Activated CD4-positive, alpha-beta memory T cell treated with anti-CD3 and anti-CD28 coated beads, Interleukin-2, amount 10 ng/mL, durations not matched to agents 7 days and 5 days (primary cell): ENCODE measurements at regions of chr1 and their contacts with region 1.

Region 1: DNA sequence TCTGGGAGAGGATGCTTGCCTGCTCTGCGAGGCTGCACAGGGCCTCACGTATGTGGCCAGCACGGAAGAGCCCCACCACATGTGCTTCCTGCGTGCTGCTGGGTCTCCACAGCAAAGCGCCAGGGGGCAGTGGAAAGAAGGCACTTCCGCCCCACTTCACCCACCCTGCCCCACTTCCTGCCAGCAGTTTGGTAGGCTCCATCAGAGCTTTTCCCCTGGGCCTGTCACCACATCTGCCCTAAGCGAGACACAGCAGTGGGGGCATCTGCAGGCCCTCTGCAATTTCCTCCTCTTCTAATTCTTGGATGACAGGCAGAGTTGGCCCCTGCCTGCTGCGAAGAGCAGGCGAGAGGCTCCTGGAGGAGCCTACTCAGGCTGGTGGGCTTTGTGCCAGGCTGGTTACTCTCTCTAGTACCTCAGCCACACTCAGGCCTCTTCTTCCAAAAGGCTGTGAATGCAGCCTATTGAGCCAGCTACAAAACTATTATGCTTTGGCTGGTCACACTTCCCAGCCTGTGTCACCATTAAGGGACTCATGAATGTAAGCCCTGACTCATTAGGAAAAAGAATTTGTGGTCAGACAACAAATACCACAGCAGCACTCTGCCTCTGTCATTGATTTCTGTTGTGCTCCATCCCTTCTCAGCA is 25.0 kb downstream of the CD244 start:
- DNase-seq: peak; percentile 92
- H3K4me3 Mint-ChIP-seq: peak overlapping the region; percentile 52
- H3K27ac Mint-ChIP-seq: peak overlapping the region; percentile 98
- H3K4me1 Mint-ChIP-seq: peaks cover 53% of the 10 kb centered on the region
- H3K27me3 Mint-ChIP-seq: no peaks in the 10 kb centered on the region

Region 2: DNA sequence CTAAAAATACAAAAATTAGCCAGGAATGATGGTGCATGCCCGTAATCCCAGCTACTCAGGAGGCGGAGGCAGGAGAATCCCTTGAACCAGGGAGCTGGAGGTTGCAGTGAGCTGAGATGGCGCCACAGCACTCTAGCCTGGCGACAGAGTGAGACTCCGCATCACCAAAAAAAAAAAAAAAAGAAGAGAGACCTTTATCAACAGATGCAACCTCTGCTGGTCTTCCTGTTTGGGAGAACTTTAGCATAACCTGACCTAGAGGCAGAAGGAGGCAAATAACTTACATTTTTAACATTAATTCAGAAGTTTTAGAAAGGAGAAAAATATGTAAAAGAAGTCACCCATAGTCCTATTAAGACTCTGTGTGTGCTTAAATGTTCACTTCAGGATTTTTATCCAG is 223.3 kb before region 1 on chr1:
- CTCF ChIA-PET with region 1: no interaction called
- POLR2A ChIA-PET with region 1: no interaction called
- DNase-seq: no peak
- H3K4me3 Mint-ChIP-seq: no peak overlapping the region
- H3K27ac Mint-ChIP-seq: no peak overlapping the region
- H3K4me1 Mint-ChIP-seq: peaks cover 65% of the 10 kb centered on the region
- H3K27me3 Mint-ChIP-seq: no peaks in the 10 kb centered on the region

Region 3: GRCh38 chr1:160647329-160647720 is 190.4 kb before region 1 on chr1:
- CTCF ChIA-PET with region 1: no interaction called
- POLR2A ChIA-PET with region 1: no interaction called
- DNase-seq: no peak
- H3K4me3 Mint-ChIP-seq: peak overlapping the region; percentile 88
- H3K27ac Mint-ChIP-seq: peak overlapping the region; percentile 89
- H3K4me1 Mint-ChIP-seq: peaks cover 52% of the 10 kb centered on the region
- H3K27me3 Mint-ChIP-seq: no peaks in the 10 kb centered on the region

Region 4: GRCh38 chr1:160681067-160681890 is 156.4 kb before region 1 on chr1:
- CTCF ChIA-PET with region 1: interaction called, 10 read pairs
- POLR2A ChIA-PET with region 1: interaction called, 4 read pairs
- DNase-seq: peak; percentile 90
- H3K4me3 Mint-ChIP-seq: no peak overlapping the region
- H3K27ac Mint-ChIP-seq: peak overlapping the region; percentile 96
- H3K4me1 Mint-ChIP-seq: peaks cover 79% of the 10 kb centered on the region
- H3K27me3 Mint-ChIP-seq: no peaks in the 10 kb centered on the region

Region 5: DNA sequence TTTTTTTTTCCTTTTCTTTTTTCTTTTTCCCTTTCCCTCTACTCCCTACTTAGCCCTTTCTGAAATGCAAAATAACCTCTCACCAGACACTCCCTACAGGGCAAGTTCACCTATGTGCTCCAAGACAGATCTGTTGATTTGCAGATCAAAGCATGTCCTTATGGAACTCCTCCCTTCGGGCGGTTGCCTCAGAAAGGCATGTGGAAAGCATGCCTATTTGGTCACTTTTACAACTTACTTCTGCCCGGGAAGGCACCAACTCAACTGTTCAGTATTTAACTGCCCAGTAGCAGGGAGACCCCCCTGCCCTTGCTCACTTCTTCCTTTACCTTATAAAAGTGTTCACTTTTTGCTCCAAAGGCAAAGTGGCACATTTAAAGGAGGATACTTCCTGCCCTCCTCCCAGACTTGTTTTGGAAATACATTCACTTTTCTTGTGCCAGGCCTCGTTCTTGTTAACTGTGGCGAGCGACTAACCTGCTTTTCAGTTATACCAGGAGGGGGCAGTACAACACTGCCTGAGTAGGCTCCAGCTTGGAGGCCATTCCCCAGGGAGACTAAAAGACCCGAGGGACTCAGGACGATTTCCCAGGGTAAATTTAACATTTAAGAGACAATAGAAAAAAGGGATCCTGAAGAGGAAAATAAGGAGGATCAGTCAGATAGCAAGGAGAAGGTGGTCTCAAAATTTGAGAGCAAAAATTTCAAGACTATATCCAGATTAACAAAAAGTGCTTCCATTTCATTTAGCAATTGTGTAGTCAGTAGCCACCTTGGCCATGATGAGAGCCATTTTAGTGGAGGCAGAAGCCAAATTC is 111.0 kb before region 1 on chr1:
- CTCF ChIA-PET with region 1: interaction called, 47 read pairs
- POLR2A ChIA-PET with region 1: no interaction called
- DNase-seq: peak; percentile 70
- H3K4me3 Mint-ChIP-seq: no peak overlapping the region
- H3K27ac Mint-ChIP-seq: no peak overlapping the region
- H3K4me1 Mint-ChIP-seq: peaks cover 31% of the 10 kb centered on the region
- H3K27me3 Mint-ChIP-seq: no peaks in the 10 kb centered on the region

Region 6: GRCh38 chr1:160739098-160739511 is 98.6 kb before region 1 on chr1 and contains the start of gene SLAMF7:
- CTCF ChIA-PET with region 1: no interaction called
- POLR2A ChIA-PET with region 1: no interaction called
- DNase-seq: peak; percentile 44
- H3K4me3 Mint-ChIP-seq: peak within 1 kb of the TSS; percentile 67
- H3K27ac Mint-ChIP-seq: no peak within 1 kb of the TSS
- H3K4me1 Mint-ChIP-seq: peaks cover 56% of the 10 kb centered on the region
- H3K27me3 Mint-ChIP-seq: peaks cover 2% of the 10 kb centered on the region
- total RNA-seq, gene SLAMF7: 13.7 to 15.3 TPM

Region 7: GRCh38 chr1:160777486-160778089 is 60.1 kb before region 1 on chr1:
- CTCF ChIA-PET with region 1: interaction called, 52 read pairs
- POLR2A ChIA-PET with region 1: interaction called, 10 read pairs
- DNase-seq: peak; percentile 56
- H3K4me3 Mint-ChIP-seq: no peak overlapping the region
- H3K27ac Mint-ChIP-seq: no peak overlapping the region
- H3K4me1 Mint-ChIP-seq: peaks cover 37% of the 10 kb centered on the region
- H3K27me3 Mint-ChIP-seq: no peaks in the 10 kb centered on the region

Region 8: GRCh38 chr1:160862203-160863060 is 24.8 kb after region 1 on chr1 and contains the start of gene CD244:
- CTCF ChIA-PET with region 1: interaction called, 19 read pairs
- POLR2A ChIA-PET with region 1: interaction called, 23 read pairs
- DNase-seq: peak; percentile 73
- H3K4me3 Mint-ChIP-seq: peak within 1 kb of the TSS; percentile 33
- H3K27ac Mint-ChIP-seq: peak within 1 kb of the TSS; percentile 66
- H3K4me1 Mint-ChIP-seq: peaks cover 29% of the 10 kb centered on the region
- H3K27me3 Mint-ChIP-seq: peaks cover 3% of the 10 kb centered on the region
- total RNA-seq, gene CD244: 2.0 to 2.3 TPM

Region 9: GRCh38 chr1:160884579-160884978 is 46.9 kb after region 1 on chr1:
- CTCF ChIA-PET with region 1: interaction called, 67 read pairs
- POLR2A ChIA-PET with region 1: interaction called, 4 read pairs
- DNase-seq: no peak
- H3K4me3 Mint-ChIP-seq: no peak overlapping the region
- H3K27ac Mint-ChIP-seq: no peak overlapping the region
- H3K4me1 Mint-ChIP-seq: no peaks in the 10 kb centered on the region
- H3K27me3 Mint-ChIP-seq: peaks cover 5% of the 10 kb centered on the region

Region 10: DNA sequence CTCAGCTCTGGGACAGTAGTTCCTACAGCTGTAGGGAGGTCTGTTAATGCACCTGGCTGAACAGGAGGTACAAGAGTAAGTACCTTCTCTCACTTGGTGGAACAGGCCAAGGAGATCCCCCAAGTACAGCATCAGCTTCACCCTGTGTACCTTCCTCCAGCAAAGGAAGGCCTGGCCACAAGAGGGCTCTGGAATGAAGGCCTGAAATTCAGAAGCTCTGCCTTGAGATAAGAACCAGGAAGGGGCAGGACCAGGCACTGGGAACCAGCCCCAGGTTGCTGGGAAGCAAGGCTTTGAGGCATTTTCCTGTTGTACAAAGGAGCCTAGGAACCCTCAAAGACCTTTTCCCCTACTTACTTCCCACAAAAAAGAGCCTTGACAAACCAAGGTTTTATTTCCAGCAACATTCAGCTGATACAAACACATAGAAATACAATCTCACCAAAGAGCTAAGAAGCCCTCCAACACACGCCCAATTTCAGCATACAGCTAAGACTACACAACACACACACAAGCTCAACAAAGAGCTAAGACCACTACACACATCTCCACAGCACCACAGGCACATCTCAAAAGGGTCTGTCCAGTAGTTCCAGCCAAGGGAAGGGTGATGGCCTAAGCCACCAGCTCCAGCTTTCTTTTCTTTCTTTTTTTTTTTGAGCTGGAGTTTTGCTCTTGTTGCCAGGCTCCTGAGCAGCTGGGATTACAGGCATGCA is 159.8 kb after region 1 on chr1:
- CTCF ChIA-PET with region 1: interaction called, 42 read pairs
- POLR2A ChIA-PET with region 1: no interaction called
- DNase-seq: peak; percentile 59
- H3K4me3 Mint-ChIP-seq: no peak overlapping the region
- H3K27ac Mint-ChIP-seq: no peak overlapping the region
- H3K4me1 Mint-ChIP-seq: peaks cover 9% of the 10 kb centered on the region
- H3K27me3 Mint-ChIP-seq: no peaks in the 10 kb centered on the region